ENCODE measurements at regions of chr12 and their contacts with region 1.

Region 1: DNA sequence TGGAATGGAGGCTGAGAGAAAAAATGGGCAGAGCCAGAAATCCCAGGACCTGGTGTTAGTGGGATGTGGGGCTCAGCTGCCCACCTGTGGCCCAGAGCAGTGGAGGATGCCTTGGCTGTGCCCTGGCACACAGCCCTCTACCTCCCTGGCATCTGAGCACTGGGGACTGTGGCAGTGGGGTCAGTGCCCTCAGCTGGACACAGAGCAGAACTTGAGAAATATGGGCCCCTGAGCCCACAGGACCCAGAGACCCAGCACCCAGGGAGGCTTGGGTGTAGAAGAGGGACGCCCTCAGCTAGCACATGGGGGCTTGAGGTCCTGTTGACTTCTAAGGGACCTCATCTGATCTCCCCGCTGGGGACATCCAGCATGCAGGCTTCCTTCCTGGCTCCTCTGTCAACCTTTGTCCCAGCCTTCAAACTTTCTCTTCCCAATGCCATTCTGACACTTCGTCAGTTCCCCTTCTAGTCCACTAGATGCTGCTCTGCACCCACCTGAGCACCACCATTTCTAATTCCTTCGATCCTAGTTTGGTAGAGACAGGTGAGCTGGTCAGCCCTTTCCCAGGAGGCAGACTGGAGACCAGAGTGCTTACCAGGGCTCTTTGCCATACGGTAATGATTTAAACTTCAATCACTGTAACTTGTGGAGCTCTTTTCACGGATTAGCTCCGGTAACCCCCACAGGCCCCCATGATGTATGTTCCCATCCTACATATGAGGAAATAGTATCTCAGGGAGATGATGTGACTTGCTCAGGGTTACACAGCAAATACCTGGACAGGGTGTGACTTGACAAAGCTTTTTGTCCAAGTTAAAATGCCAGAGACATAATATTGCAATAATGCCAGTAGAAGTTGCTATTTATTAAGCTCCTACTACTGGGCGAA is 143.7 kb downstream of the ASCL4 start:
- DNase-seq: peak; percentile 46
- H3K4me3 Mint-ChIP-seq: no peak overlapping the region
- H3K27ac Mint-ChIP-seq: no peak overlapping the region
- H3K4me1 Mint-ChIP-seq: no peaks in the 10 kb centered on the region
- H3K27me3 Mint-ChIP-seq: peaks cover 19% of the 10 kb centered on the region
- CTCF ChIP-seq: peak; percentile 61

Region 2: DNA sequence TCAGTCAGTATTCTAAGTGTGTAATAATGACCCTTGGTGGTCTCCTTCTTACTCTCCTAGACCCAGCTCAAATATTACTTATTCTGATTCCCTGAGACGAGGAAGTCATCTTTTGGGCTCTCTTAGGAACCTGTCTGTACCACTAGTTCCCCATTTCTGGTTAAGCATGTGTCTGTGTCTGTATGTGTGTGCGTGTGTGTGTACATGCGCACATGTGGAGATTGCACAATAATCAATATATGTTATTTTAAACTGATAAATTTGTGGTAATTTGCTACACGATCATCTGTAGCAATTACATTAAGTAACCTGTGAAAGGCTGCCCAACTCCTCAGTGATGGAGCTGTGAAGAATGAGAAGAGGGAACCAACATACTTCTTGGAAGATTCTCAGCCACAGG is 11.4 kb before region 1 on chr12:
- CTCF ChIA-PET with region 1: interaction called, 16 read pairs
- POLR2A ChIA-PET with region 1: no interaction called
- intact Hi-C with region 1: no loop called
- DNase-seq: no peak
- H3K4me3 Mint-ChIP-seq: no peak overlapping the region
- H3K27ac Mint-ChIP-seq: no peak overlapping the region
- H3K4me1 Mint-ChIP-seq: no peaks in the 10 kb centered on the region
- H3K27me3 Mint-ChIP-seq: peaks cover 17% of the 10 kb centered on the region
- CTCF ChIP-seq: no peak

Region 3: DNA sequence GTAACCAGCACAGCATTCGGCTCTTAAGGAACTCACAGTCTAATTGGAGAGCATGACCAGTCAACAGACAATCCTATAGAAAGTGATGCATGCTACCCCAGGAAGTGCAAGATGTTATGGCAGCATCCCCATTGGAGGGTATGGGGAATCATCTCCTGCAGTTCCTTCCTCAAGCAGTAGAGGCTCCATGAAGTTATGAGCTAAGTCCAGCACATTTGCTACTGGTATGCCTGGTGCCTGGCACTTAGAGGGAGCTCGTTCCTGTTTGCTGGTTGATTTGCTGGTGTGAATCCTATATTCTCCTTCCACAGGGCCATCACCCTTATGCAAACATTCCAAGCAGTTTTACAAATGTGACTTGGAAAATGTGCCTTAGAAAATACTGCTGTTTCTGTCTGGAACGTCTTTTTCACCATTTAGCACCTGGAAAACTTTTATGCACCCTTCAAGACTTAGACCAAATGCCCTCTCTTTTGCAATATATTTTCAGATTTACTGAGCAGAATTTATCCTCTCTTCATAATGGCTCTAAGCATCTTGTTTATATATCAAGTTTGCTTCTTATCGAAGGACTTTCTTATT is 74.8 kb after region 1 on chr12:
- CTCF ChIA-PET with region 1: interaction called, 12 read pairs
- POLR2A ChIA-PET with region 1: no interaction called
- intact Hi-C with region 1: no loop called
- DNase-seq: peak; percentile 55
- H3K4me3 Mint-ChIP-seq: no peak overlapping the region
- H3K27ac Mint-ChIP-seq: no peak overlapping the region
- H3K4me1 Mint-ChIP-seq: no peaks in the 10 kb centered on the region
- H3K27me3 Mint-ChIP-seq: peaks cover 12% of the 10 kb centered on the region
- CTCF ChIP-seq: peak; percentile 39

Region 4: GRCh38 chr12:108017472-108018057 is 99.4 kb after region 1 on chr12:
- CTCF ChIA-PET with region 1: no interaction called
- POLR2A ChIA-PET with region 1: no interaction called
- intact Hi-C with region 1: no loop called
- DNase-seq: no peak
- H3K4me3 Mint-ChIP-seq: no peak overlapping the region
- H3K27ac Mint-ChIP-seq: no peak overlapping the region
- H3K4me1 Mint-ChIP-seq: no peaks in the 10 kb centered on the region
- H3K27me3 Mint-ChIP-seq: peaks cover 9% of the 10 kb centered on the region
- CTCF ChIP-seq: no peak

Region 5: GRCh38 chr12:108193917-108194316 is 275.8 kb after region 1 on chr12:
- CTCF ChIA-PET with region 1: interaction called, 3 read pairs
- POLR2A ChIA-PET with region 1: no interaction called
- intact Hi-C with region 1: loop called (anchors 1 kb)
- DNase-seq: peak; percentile 45
- H3K4me3 Mint-ChIP-seq: no peak overlapping the region
- H3K27ac Mint-ChIP-seq: no peak overlapping the region
- H3K4me1 Mint-ChIP-seq: no peaks in the 10 kb centered on the region
- H3K27me3 Mint-ChIP-seq: no peaks in the 10 kb centered on the region
- CTCF ChIP-seq: peak; percentile 38

Region 6: GRCh38 chr12:108507971-108508642 is 590.0 kb after region 1 on chr12:
- CTCF ChIA-PET with region 1: interaction called, 51 read pairs
- POLR2A ChIA-PET with region 1: interaction called, 3 read pairs
- intact Hi-C with region 1: loop called (anchors 1 kb)
- DNase-seq: no peak
- H3K4me3 Mint-ChIP-seq: no peak overlapping the region
- H3K27ac Mint-ChIP-seq: no peak overlapping the region
- H3K4me1 Mint-ChIP-seq: peaks cover 7% of the 10 kb centered on the region
- H3K27me3 Mint-ChIP-seq: no peaks in the 10 kb centered on the region
- CTCF ChIP-seq: no peak